Right ventricle myocardium superior (tissue), 1 donor: ENCODE measurements at regions of chr10 and their contacts with region 1.

Region 1: DNA sequence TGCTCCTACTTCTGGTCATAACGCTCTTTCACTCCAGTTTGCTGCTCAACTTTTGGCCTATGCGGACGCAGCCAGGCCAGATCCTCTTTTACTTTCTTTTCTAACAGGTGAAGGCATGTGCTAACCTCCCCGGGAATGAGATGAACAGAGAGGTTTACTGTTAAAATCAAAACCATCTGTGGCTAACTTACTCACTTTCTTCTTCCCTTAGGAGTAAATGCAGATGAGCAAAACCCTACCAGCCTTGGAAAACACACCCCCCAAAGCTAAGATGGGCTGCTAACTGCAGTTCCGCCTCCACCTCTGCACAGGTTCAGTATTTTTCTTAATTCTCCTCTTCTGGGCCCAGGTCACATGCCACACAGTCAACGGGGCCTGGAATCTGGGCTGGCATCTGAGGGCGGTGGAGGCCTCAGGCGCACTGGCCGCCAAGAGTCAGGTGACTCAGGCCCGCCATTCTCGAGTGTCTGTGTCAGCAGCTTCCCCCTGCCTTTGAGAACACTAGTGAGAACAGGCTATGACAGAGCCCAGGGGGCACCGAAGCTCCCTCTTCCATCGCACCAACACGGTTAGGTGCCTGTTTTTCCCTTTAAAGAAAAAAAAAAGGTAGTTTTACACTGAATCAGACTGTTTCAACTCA is 11.1 kb downstream of the FAM53B start:
- DNase-seq: peak; percentile 72
- ATAC-seq: peak; percentile 59

Region 2: GRCh38 chr10:124632064-124632531 is 101.0 kb before region 1 on chr10:
- intact Hi-C with region 1: loop called (anchors 5 kb)
- DNase-seq: peak; percentile 74
- ATAC-seq: peak; percentile 71

Region 3: DNA sequence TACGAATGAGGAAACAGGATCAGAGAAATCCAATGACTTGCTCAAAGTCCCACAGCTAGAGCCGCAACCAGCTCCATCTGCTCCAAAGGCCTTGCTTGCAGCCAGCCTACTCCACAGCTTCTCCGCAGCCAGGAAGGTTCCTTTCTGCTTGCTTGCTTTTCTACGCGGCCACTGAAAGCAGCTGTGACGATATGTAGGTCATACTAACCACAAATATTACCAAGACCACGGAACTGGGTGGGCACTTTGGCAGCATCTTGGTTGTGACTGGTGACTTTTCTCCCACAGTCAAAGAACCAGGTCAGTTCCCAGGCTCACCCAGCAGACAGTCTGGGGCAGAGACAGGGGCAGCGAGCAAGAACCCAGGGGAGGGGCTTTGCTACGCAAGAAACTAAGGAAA is 75.2 kb before region 1 on chr10:
- intact Hi-C with region 1: no loop called
- DNase-seq: peak; percentile 44
- ATAC-seq: no peak

Region 4: DNA sequence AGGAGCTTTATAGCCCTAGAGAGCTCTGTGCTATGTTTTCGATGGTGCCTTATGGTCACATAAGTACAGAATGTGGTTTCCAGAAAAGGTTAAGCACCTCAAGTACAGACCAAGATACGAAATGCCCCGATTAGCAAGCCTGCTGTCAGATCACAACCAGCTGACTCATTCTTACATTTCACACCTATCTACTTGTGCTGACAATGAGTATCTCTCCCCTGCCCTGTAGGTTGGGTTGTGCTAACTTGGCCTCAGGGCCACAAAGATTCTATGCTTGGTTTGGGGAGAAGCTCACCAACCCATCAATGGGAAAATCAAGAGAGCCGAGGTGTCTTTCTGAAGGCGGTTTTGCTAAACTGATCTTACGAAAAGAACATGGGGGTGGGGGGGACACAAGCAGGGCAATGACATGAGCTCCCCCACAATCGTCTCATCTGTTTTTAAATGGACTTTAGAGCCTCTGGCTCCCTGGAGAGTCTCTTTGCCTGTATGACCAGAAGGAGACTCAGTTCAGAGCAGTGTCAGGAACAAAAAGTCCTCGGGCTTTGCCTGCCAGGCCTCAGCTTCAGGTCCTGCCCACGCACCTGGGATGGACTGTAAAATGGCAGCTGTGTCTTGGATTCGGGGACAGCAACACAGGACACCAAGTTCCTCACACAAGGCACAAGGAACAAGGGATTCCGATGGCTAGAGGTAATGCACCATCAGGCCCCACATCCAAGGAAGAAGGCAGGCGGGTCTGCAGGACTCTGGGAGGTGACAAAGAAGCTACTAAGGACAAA is 44.0 kb before region 1 on chr10:
- intact Hi-C with region 1: loop called (anchors 10 kb)
- DNase-seq: no peak
- ATAC-seq: peak; percentile 28